Activated CD4-positive, alpha-beta memory T cell treated with anti-CD3 and anti-CD28 coated beads for 36 hours (primary cell): ENCODE measurements at regions of chr11 and their contacts with region 1.

Region 1: GRCh38 chr11:32435511-32435941 is at the start of gene WT1:
- DNase-seq: no peak
- H3K4me3 Mint-ChIP-seq: peak within 1 kb of the TSS; percentile 53
- H3K27ac Mint-ChIP-seq: no peak within 1 kb of the TSS
- H3K4me1 Mint-ChIP-seq: peaks cover 46% of the 10 kb centered on the region
- H3K27me3 Mint-ChIP-seq: peaks cover 77% of the 10 kb centered on the region
- total RNA-seq, gene WT1: not detected

Region 2: GRCh38 chr11:31804312-31805036 is 631.1 kb before region 1 on chr11:
- CTCF ChIA-PET with region 1: no interaction called
- POLR2A ChIA-PET with region 1: no interaction called
- intact Hi-C with region 1: loop called (anchors 5 kb)
- DNase-seq: no peak
- H3K4me3 Mint-ChIP-seq: peak overlapping the region; percentile 17
- H3K27ac Mint-ChIP-seq: peak overlapping the region; percentile 6
- H3K4me1 Mint-ChIP-seq: peaks cover 33% of the 10 kb centered on the region
- H3K27me3 Mint-ChIP-seq: peaks cover 82% of the 10 kb centered on the region

Region 3: GRCh38 chr11:32411942-32412615 is 23.4 kb before region 1 on chr11:
- CTCF ChIA-PET with region 1: no interaction called
- POLR2A ChIA-PET with region 1: no interaction called
- intact Hi-C with region 1: no loop called
- DNase-seq: no peak
- H3K4me3 Mint-ChIP-seq: no peak overlapping the region
- H3K27ac Mint-ChIP-seq: no peak overlapping the region
- H3K4me1 Mint-ChIP-seq: no peaks in the 10 kb centered on the region
- H3K27me3 Mint-ChIP-seq: peaks cover 14% of the 10 kb centered on the region

Region 4: GRCh38 chr11:32615422-32615821 is 179.9 kb after region 1 on chr11:
- CTCF ChIA-PET with region 1: no interaction called
- POLR2A ChIA-PET with region 1: no interaction called
- intact Hi-C with region 1: loop called (anchors 10 kb)
- DNase-seq: no peak
- H3K4me3 Mint-ChIP-seq: no peak overlapping the region
- H3K27ac Mint-ChIP-seq: no peak overlapping the region
- H3K4me1 Mint-ChIP-seq: no peaks in the 10 kb centered on the region
- H3K27me3 Mint-ChIP-seq: peaks cover 8% of the 10 kb centered on the region